ENCODE measurements at regions of chr1 and their contacts with region 1.

Region 1: DNA sequence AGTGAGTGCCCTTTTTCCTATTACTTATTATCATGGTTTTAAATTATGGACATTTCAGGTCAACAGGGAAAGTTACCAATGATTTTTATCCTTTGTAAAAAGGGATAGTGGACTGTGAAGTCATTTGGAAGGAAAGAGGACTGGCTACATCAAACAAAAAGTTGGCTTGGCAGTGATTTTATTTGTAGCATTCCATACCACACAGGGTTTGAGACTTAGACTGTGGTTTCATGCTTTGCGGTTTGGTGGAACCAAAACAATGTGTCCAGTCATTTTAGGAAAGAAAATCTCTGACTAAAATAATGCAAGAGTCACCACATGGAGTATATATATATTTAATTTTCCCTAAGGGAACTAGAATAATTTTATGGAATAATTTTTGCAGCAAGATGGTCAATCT is 239.5 kb downstream of the HMCN1 start:
- DNase-seq: peak in 1 of 2 experiments; percentile 8
- H3K4me3 ChIP-seq: no peak overlapping the region
- H3K27ac ChIP-seq: no peak overlapping the region
- H3K4me1 ChIP-seq: no peaks in the 10 kb centered on the region
- H3K27me3 ChIP-seq: no peaks in the 10 kb centered on the region
- CTCF ChIP-seq: no peak

Region 2: GRCh38 chr1:186094170-186094569 is 120.5 kb after region 1 on chr1:
- CTCF ChIA-PET with region 1: no interaction called
- POLR2A ChIA-PET with region 1: no interaction called
- intact Hi-C with region 1: loop called (anchors 5 kb)
- DNase-seq: peak in 1 of 2 experiments; percentile 61
- H3K4me3 ChIP-seq: no peak overlapping the region
- H3K27ac ChIP-seq: 0 out of 2 replicates have a peak overlapping the region, but pooled peaks have one; percentile 25
- H3K4me1 ChIP-seq: peaks cover 14% of the 10 kb centered on the region; the same call in 1 of the 2 replicates
- H3K27me3 ChIP-seq: no peaks in the 10 kb centered on the region
- CTCF ChIP-seq: no peak